HCT116 (cell line): ENCODE measurements at regions of chr5 and their contacts with region 1.

Region 1: GRCh38 chr5:43484106-43484849 is 613 bp upstream of the TMEM267 start:
- DNase-seq: peak; percentile 51
- ATAC-seq: peak; percentile 79
- H3K4me3 ChIP-seq: peak overlapping the region; percentile 74 to 90
- H3K27ac ChIP-seq: peak overlapping the region; percentile 73
- H3K4me1 ChIP-seq: peaks cover 2 to 16% of the 10 kb centered on the region in 2 experiments; a peak in 2 of 4 replicates
- H3K27me3 ChIP-seq: no peaks in the 10 kb centered on the region
- CTCF ChIP-seq: peak; percentile 44 to 75 (median 74)
- POLR2A ChIP-seq: no peak
- RAD21 ChIP-seq: peak; percentile 57

Region 2: GRCh38 chr5:43227655-43228054 is 256.6 kb before region 1 on chr5:
- CTCF ChIA-PET with region 1: interaction called, 3 read pairs
- POLR2A ChIA-PET with region 1: interaction called, 3 read pairs
- RAD21 ChIA-PET with region 1: no interaction called
- intact Hi-C with region 1: loop called (anchors 10 kb)
- DNase-seq: peak; percentile 47
- ATAC-seq: peak; percentile 72
- H3K4me3 ChIP-seq: no peak overlapping the region
- H3K27ac ChIP-seq: no peak overlapping the region
- H3K4me1 ChIP-seq: no peaks in the 10 kb centered on the region
- H3K27me3 ChIP-seq: no peaks in the 10 kb centered on the region
- CTCF ChIP-seq: peak; percentile 42 to 87 (median 59); a peak in 5 of 6 replicates
- POLR2A ChIP-seq: no peak
- RAD21 ChIP-seq: peak; percentile 75

Region 3: GRCh38 chr5:43514816-43515677 is 30.8 kb after region 1 on chr5 and contains the start of gene C5orf34:
- CTCF ChIA-PET with region 1: interaction called, 5 read pairs
- POLR2A ChIA-PET with region 1: interaction called, 10 read pairs
- RAD21 ChIA-PET with region 1: no interaction called
- intact Hi-C with region 1: no loop called
- DNase-seq: peak; percentile 90
- ATAC-seq: peak; percentile 99
- H3K4me3 ChIP-seq: peak within 1 kb of the TSS; percentile 80 to 85
- H3K27ac ChIP-seq: peak within 1 kb of the TSS; percentile 70
- H3K4me1 ChIP-seq: peaks cover 5 to 18% of the 10 kb centered on the region in 2 experiments; a peak in 2 of 4 replicates
- H3K27me3 ChIP-seq: no peaks in the 10 kb centered on the region
- CTCF ChIP-seq: no peak
- POLR2A ChIP-seq: peak; percentile 94
- RAD21 ChIP-seq: no peak
- total RNA-seq, gene C5orf34: 4.8 TPM

Region 4: GRCh38 chr5:43556857-43557542 is 72.7 kb after region 1 on chr5 and contains the start of gene PAIP1:
- CTCF ChIA-PET with region 1: interaction called, 4 read pairs
- POLR2A ChIA-PET with region 1: interaction called, 3 read pairs
- RAD21 ChIA-PET with region 1: no interaction called
- intact Hi-C with region 1: loop called (anchors 5 kb)
- DNase-seq: peak; percentile 64
- ATAC-seq: peak; percentile 89
- H3K4me3 ChIP-seq: peak within 1 kb of the TSS; percentile 81 to 84
- H3K27ac ChIP-seq: peak within 1 kb of the TSS; percentile 97
- H3K4me1 ChIP-seq: peaks cover 10 to 18% of the 10 kb centered on the region in 2 experiments
- H3K27me3 ChIP-seq: no peaks in the 10 kb centered on the region
- CTCF ChIP-seq: peak; percentile 41 to 65 (median 57); a peak in 5 of 6 replicates
- POLR2A ChIP-seq: no peak
- RAD21 ChIP-seq: no peak
- total RNA-seq, gene PAIP1: 83.8 TPM